OCI-LY7 (cell line): ENCODE measurements at regions of chr11 and their contacts with region 1.

Region 1: DNA sequence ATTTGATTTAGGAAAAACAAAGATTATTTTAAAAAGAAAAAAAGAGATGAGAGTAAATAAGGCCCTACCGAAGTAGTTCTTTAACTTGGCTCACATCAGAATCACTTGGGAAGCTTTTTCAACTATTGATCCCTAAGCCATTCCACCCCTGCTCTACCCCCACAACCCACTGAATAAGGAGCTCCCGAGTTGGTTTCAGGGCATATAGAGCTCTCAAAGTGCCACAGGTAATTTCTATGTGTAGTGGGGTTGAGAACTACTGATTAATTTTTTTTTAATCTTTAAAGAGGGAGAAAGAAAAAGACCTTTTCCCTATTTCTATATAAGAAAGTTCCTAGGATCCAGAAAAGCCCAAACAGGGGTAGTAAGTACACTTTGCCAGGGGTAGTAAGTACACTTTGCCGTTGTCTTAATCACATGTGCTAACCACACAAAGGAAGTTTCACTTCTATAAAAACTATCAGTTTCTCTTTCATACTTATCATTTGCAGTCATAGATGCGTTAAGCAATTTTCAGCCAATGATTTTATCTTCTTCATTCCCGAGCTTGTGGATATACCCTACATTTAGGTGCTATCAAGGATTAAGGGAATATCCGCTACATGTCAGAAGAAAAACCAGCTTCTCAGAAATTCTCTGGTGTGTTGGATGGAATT is 108.4 kb upstream of the ZC3H12C start:
- DNase-seq: peak; percentile 67
- H3K4me3 ChIP-seq: peak overlapping the region; percentile 28
- H3K27ac ChIP-seq: peak overlapping the region; percentile 59
- H3K4me1 ChIP-seq: peaks cover 20% of the 10 kb centered on the region
- CTCF ChIP-seq: no peak

Region 2: GRCh38 chr11:109933126-109933525 is 51.6 kb before region 1 on chr11:
- CTCF ChIA-PET with region 1: no interaction called
- POLR2A ChIA-PET with region 1: no interaction called
- intact Hi-C with region 1: no loop called
- DNase-seq: no peak
- H3K4me3 ChIP-seq: no peak overlapping the region
- H3K27ac ChIP-seq: no peak overlapping the region
- H3K4me1 ChIP-seq: no peaks in the 10 kb centered on the region
- CTCF ChIP-seq: no peak

Region 3: GRCh38 chr11:109946322-109946846 is 38.4 kb before region 1 on chr11:
- CTCF ChIA-PET with region 1: no interaction called
- POLR2A ChIA-PET with region 1: interaction called, 4 read pairs
- intact Hi-C with region 1: loop called (anchors 2 kb)
- DNase-seq: peak; percentile 87
- H3K4me3 ChIP-seq: peak overlapping the region; percentile 48
- H3K27ac ChIP-seq: no peak overlapping the region
- H3K4me1 ChIP-seq: peaks cover 9% of the 10 kb centered on the region
- CTCF ChIP-seq: peak; percentile 99